AG04449 (cell line): ENCODE measurements at regions of chr22 and their contacts with region 1.

Region 1: GRCh38 chr22:35430897-35431322 is 31.0 kb downstream of the MCM5 start:
- DNase-seq: peak; percentile 68
- H3K4me3 ChIP-seq: no peak overlapping the region
- CTCF ChIP-seq: peak; percentile 93

Region 2: GRCh38 chr22:35308480-35309021 is 122.4 kb before region 1 on chr22:
- CTCF ChIA-PET with region 1: no interaction called
- POLR2A ChIA-PET with region 1: no interaction called
- DNase-seq: no peak
- H3K4me3 ChIP-seq: no peak overlapping the region
- CTCF ChIP-seq: no peak

Region 3: DNA sequence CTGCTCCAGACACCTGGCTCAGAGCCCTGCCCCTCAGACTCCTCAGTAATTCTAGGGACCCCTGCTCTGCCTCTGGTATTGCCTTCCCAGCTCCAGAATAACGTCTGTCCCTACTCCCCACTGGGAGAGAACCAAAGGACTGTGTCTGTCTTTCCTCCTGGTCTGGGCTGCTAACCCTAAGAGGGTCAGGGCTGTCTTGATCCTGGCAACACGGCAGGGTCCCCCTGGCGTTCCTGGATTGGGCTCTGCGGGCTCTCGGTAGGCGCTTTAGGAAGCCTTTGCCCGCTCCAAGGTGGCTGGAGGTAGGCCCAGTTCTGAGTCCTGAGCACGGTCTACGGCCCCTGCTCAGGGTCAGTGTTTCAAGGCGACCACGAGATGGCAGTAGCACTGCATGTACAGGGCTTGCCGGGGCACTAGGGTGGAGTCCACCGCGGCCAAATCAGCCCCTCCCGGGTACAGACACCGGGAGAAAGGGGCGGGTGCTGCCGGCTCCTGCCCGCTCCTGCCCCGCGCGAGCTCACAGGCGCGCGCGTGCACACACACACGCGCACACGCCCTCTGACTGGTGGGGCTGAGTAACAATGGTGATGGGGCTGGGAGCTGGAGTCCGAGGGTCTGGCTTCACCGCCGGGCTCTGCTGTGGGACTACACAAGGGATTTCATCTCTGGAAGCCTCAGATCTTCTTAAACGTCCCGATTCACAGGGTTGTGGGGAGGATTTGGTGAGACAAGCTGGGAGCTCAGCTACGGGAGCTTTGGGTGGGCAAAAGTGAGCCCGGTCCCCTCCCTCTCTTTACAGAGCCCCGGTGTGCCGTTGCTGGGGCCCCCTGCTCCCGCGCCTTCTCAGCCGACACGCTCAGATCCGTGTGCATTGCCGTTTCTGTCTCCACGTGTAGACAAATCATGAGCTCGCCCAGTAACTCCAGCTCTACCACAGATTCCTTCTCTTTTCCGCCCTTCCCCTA is 80.1 kb before region 1 on chr22:
- CTCF ChIA-PET with region 1: interaction called, 41 read pairs
- POLR2A ChIA-PET with region 1: no interaction called
- DNase-seq: peak; percentile 56
- H3K4me3 ChIP-seq: peak overlapping the region; percentile 69
- CTCF ChIP-seq: peak; percentile 87

Region 4: DNA sequence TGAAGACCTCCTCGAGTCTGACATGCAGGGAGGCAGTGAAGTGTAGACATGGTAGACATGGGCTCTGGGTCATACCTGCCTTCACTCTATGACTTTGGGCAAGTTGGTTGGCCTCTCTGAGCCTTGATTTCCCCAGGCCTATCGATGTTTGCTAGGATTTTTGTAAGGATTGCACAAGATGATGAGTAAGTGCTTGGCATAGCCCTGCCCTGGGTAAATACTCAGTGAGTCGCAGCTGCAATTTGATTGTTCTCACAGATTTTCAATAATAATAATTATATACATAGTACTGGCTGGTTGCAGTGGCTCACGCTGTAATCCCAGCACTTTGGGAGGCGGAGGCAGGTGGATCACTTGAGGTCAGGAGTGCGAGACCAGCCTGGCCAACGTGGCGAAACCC is 12.8 kb before region 1 on chr22:
- CTCF ChIA-PET with region 1: interaction called, 24 read pairs
- POLR2A ChIA-PET with region 1: no interaction called
- DNase-seq: no peak
- H3K4me3 ChIP-seq: no peak overlapping the region
- CTCF ChIP-seq: no peak

Region 5: DNA sequence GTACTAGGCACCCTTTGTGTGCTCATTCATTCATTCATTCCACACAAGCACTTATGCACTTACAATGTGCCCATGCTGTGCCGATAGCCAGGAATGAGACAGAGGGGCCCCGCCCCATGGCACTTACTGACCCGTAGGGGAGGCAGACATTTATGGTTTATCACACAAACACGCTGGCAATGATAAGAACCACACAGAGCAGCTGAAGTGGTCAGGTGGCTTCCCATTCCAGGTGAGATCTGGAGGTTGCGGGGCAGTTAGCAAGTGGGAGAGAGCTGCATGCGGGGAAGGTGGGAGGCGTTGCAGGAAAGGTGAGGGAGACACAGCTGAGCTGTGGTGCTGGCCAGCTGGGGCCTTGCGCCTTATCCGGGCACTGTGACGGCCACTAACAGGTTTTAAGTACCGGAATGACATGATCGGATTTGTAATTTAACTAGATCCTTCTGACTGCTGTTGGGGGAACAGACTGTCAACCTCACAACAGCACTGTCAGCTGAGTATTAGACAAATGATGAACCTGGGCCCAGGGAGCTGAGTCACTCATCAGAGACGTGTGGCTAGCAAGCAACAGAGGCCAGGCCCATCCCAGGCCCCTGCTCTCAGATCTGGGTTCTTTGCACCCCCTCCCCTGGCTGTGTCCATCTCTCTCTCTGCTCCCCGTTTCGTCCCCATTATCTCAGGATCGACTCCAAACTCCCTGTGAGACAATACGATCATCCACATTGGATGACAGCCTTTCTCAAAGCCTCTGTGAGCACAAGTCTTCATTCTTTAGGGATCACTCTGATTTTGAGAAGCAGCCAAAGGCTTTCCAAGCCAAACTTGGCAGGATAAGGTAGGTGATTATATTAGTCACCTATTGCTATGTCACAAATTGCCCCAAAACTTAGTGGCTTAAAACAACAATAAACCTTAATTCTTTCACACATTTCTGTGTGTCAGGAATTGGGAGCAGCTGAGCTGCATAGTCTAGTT is 138.1 kb after region 1 on chr22:
- CTCF ChIA-PET with region 1: interaction called, 352 read pairs
- POLR2A ChIA-PET with region 1: no interaction called
- DNase-seq: peak; percentile 31
- H3K4me3 ChIP-seq: no peak overlapping the region
- CTCF ChIP-seq: no peak

Region 6: DNA sequence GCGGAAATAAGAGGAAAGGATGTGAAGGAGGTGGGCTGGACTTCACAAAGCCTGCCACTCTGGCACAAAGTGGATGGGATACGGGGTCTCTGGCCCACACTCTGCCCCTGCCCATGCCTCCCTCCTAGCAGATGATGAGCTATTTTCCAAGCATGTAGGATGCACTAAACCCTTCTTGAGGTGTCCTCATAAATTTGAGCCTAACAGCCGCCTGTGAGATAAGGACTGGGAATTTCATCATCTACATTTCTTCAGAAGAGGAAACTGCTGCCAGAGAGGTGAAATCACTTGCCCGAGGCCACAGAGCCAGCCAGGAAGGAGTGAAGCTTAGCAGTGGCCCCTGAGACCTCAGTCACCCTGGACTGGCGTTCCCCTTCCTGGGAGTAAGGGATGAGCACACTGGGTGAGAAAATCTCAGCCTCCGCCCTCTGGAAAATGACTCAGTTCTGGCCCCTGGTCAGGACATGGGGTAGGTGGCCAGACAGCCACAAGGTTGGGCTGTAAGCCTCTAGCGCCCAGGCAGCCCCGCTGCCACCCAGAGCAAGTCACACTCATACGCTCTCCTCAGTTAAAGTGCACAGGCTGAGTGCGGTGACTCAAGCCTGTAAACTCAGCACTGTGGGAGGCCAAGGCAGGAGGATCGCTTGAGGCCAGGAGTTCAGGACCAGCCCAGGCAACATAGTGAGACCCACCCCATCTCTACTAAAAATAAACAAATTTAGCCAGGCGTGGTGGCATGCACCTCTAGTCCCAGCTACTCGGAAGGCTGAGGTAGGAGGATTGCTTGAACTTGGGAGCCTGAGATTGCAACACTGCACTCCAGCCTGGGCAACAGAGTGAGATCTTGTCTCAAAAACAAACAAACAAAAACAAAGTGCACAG is 158.4 kb after region 1 on chr22:
- CTCF ChIA-PET with region 1: interaction called, 352 read pairs
- POLR2A ChIA-PET with region 1: no interaction called
- DNase-seq: peak; percentile 84
- H3K4me3 ChIP-seq: no peak overlapping the region
- CTCF ChIP-seq: no peak

Region 7: GRCh38 chr22:35622191-35622913 is 191.4 kb after region 1 on chr22:
- CTCF ChIA-PET with region 1: interaction called, 50 read pairs
- POLR2A ChIA-PET with region 1: interaction called, 3 read pairs
- DNase-seq: no peak
- H3K4me3 ChIP-seq: no peak overlapping the region
- CTCF ChIP-seq: no peak